Esophagus muscularis mucosa (tissue), 4 donors: ENCODE measurements at regions of chr7 and their contacts with region 1.

Region 1: DNA sequence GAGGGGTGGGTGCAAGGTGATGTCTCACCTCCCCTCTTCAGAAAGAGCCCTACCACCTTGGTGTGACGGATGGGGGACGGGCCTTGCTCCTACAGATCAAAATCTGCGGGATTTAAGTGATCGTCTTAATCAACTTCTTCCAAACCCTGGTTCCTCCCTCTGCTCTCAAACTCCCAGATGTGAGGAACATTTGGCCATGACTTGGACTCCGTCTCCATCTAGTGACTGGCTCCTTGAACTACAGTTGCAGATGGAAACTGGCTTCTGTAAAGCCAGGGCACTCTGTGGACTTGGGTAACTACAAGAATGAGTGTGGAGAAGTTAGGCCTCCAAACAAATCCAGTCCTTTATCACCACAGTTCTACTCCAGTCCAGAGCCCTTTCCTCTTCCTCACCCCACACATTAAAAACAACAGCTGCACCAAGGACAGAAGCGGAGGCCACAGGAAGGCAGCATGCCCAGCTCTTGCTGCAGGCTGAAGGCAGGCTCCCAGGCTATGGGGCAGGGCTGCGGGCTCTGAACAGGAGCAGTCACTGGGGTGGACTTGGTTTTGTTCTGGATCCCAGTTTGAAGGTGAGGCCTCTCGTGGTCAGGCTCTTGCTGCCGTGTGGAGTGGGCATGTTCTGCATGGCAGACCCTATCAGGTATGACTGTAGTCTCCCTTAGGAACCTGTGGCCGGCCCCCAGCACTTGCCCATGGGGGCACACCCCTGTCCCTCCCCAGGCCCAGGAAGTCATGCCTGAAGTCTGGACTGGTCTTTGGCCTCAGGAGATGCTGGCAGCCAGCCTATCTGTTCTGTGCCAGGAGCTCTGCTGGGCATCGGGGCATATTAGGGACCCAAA is 79.4 kb downstream of the VWC2 start:
- DNase-seq: no peak
- H3K4me3 ChIP-seq: no peak overlapping the region
- H3K27ac ChIP-seq: no peak overlapping the region
- H3K4me1 ChIP-seq: peaks cover 0 to 4% (median 0%) of the 10 kb centered on the region in 4 donors
- H3K27me3 ChIP-seq: no peaks in the 10 kb centered on the region
- CTCF ChIP-seq: peak; percentile 47 to 69 (median 55)
- EP300 ChIP-seq: no peak
- POLR2A ChIP-seq: no peak

Region 2: GRCh38 chr7:48299580-48300169 is 1553.2 kb before region 1 on chr7:
- intact Hi-C with region 1: loop called (anchors 10 kb)
- DNase-seq: peak; percentile 45
- H3K4me3 ChIP-seq: no peak overlapping the region
- H3K27ac ChIP-seq: no peak overlapping the region
- H3K4me1 ChIP-seq: no peaks in the 10 kb centered on the region
- H3K27me3 ChIP-seq: no peaks in the 10 kb centered on the region
- CTCF ChIP-seq: peak; percentile 42 to 50 (median 42)
- EP300 ChIP-seq: no peak
- POLR2A ChIP-seq: no peak

Region 3: GRCh38 chr7:49776994-49777393 is 75.8 kb before region 1 on chr7:
- intact Hi-C with region 1: no loop called
- DNase-seq: no peak
- H3K4me3 ChIP-seq: no peak overlapping the region
- H3K27ac ChIP-seq: no peak overlapping the region
- H3K4me1 ChIP-seq: peaks cover 14 to 36% (median 33%) of the 10 kb centered on the region in 4 donors
- H3K27me3 ChIP-seq: peaks cover 0 to 60% (median 12%) of the 10 kb centered on the region in 4 donors
- CTCF ChIP-seq: no peak
- EP300 ChIP-seq: no peak
- POLR2A ChIP-seq: no peak